H1 (cell line): ENCODE measurements at regions of chr2 and their contacts with region 1.

Region 1: DNA sequence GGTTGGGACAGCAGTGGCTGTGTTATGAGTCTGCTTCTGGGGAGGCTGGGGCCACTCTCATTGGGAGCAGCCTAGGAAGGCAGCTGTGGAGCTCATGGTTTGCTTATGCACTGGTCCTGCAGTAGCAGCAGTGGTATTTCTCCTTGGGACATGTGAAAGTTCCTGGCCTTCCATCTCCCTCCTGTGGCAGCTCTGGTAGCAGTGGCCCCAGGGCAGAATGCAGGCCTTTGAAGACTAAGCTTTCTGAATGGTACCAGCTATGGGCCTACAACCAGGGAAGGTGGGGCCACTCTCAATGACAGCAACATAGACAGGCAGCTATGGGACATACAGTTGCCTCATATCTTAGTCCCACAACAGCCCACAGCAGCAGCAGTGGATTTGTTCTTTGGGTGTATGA is 117.3 kb upstream of the VWC2L start:
- DNase-seq: no peak
- H3K4me3 ChIP-seq: no peak overlapping the region
- H3K27ac ChIP-seq: no peak overlapping the region
- H3K4me1 ChIP-seq: no peaks in the 10 kb centered on the region
- H3K27me3 ChIP-seq: no peaks in the 10 kb centered on the region
- CTCF ChIP-seq: peak in 2 of 3 experiments; percentile 18 to 42; a peak in 2 of 4 replicates
- EP300 ChIP-seq: no peak
- POLR2A ChIP-seq: no peak
- RAD21 ChIP-seq: peak; percentile 47 to 64

Region 2: GRCh38 chr2:214310319-214310718 is 16.7 kb after region 1 on chr2:
- CTCF ChIA-PET with region 1: interaction called, 14 read pairs
- POLR2A ChIA-PET with region 1: no interaction called
- DNase-seq: no peak
- H3K4me3 ChIP-seq: no peak overlapping the region
- H3K27ac ChIP-seq: no peak overlapping the region
- H3K4me1 ChIP-seq: no peaks in the 10 kb centered on the region
- H3K27me3 ChIP-seq: no peaks in the 10 kb centered on the region
- CTCF ChIP-seq: peak in 2 of 3 experiments; percentile 36 to 42; a peak in 2 of 4 replicates
- EP300 ChIP-seq: no peak
- POLR2A ChIP-seq: no peak
- RAD21 ChIP-seq: peak; percentile 42 to 53